Activated B cell treated with CpG ODN at 0.5 μM for 24 hours (primary cell): ENCODE measurements at regions of chr9 and their contacts with region 1.

Region 1: DNA sequence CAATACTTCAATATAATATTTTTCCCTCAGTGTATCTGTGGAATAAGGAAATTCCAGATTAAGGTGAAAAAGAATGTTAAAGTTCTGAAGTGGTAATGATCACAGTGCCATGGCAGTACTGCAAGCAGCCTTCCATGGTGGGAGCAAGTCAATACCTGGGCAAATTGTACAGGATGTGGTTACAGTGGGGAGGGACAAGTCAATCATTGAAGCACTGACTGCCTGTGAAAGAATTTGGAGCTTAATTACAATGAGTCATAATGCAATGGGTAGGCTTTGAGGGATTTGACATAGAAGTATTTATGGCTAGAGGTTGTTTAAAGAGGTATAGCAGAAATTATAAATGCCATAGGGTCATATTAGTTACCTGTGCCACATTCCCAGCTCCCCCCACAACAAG is 786.5 kb upstream of the ACO1 start:
- DNase-seq: no peak
- ATAC-seq: no peak
- H3K4me3 Mint-ChIP-seq: no peak overlapping the region
- H3K27ac Mint-ChIP-seq: no peak overlapping the region
- H3K4me1 Mint-ChIP-seq: no peaks in the 10 kb centered on the region
- H3K27me3 Mint-ChIP-seq: no peaks in the 10 kb centered on the region
- CTCF ChIP-seq: no peak

Region 2: DNA sequence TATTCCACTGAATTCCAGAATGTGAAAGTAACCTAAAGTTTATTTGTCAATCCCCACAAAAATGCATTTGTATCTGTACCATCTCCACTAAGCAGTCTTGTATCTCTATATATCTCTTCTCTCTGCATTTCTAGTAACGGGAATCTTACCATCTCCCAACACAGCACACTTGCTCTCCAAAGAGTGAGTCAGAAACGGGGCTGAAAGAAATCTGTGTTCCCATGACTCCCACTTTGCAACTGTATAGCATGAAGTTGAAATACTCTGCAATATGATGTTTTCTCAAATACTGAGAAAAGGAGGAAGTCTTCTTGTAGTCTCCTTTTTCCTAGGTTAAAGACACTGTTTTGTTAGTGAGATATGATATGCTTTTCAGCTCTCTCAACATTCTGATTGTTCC is 62.3 kb before region 1 on chr9:
- CTCF ChIA-PET with region 1: no interaction called
- POLR2A ChIA-PET with region 1: no interaction called
- intact Hi-C with region 1: loop called (anchors 10 kb)
- DNase-seq: no peak
- ATAC-seq: no peak
- H3K4me3 Mint-ChIP-seq: no peak overlapping the region
- H3K27ac Mint-ChIP-seq: no peak overlapping the region
- H3K4me1 Mint-ChIP-seq: no peaks in the 10 kb centered on the region
- H3K27me3 Mint-ChIP-seq: no peaks in the 10 kb centered on the region
- CTCF ChIP-seq: no peak